Heart left ventricle (tissue), 16 donors: ENCODE measurements at regions of chr12 and their contacts with region 1.

Region 1: GRCh38 chr12:76763743-76764675 is at the start of gene ZDHHC17:
- DNase-seq: peak; percentile 91 to 96 (median 93)
- ATAC-seq: peak; percentile 89 to 97 (median 96)
- H3K4me3 ChIP-seq: peak within 1 kb of the TSS; percentile 69 to 97 (median 84)
- H3K27ac ChIP-seq: peak within 1 kb of the TSS; percentile 92 to 98 (median 97)
- H3K4me1 ChIP-seq: peaks cover 0 to 49% (median 32%) of the 10 kb centered on the region in 12 donors
- H3K27me3 ChIP-seq: no peaks in the 10 kb centered on the region
- CTCF ChIP-seq: no peak
- POLR2A ChIP-seq: peak in 1 of 2 donors; percentile 51
- total RNA-seq, gene ZDHHC17: 12.6 to 29.6 (median 19.4) TPM

Region 2: DNA sequence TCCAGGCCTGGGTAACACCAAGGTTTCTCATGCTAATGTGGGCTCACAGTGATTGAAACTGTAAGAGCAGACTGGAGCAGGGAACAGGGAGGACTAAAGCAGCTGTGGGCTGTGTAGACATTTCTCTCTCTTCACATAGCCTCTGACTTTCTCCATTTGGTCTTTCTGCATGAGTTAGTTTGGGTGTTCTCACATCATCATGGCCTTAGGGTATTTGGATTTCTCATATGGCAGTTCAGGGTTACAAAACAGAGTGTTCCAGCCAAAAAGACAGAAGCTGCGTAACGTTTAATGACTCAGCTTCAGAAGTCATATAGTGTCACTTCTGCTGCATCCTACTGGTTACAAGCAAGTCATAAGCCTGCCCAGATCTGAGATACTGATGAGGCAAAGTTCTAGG is 152.5 kb before region 1 on chr12:
- intact Hi-C with region 1: no loop called
- DNase-seq: no peak
- ATAC-seq: peak in 1 of 4 donors; percentile 51
- H3K4me3 ChIP-seq: no peak overlapping the region
- H3K27ac ChIP-seq: no peak overlapping the region
- H3K4me1 ChIP-seq: no peaks in the 10 kb centered on the region
- H3K27me3 ChIP-seq: no peaks in the 10 kb centered on the region
- CTCF ChIP-seq: no peak
- POLR2A ChIP-seq: no peak

Region 3: GRCh38 chr12:76685246-76685678 is 78.7 kb before region 1 on chr12:
- intact Hi-C with region 1: no loop called
- DNase-seq: peak in 4 of 5 donors; percentile 31 to 67 (median 32)
- ATAC-seq: peak; percentile 69 to 98 (median 87)
- H3K4me3 ChIP-seq: peak overlapping the region in 3 of 12 donors; percentile 3 to 25 (median 11)
- H3K27ac ChIP-seq: no peak overlapping the region
- H3K4me1 ChIP-seq: peaks cover 0 to 24% (median 9%) of the 10 kb centered on the region in 12 donors
- H3K27me3 ChIP-seq: no peaks in the 10 kb centered on the region
- CTCF ChIP-seq: no peak
- POLR2A ChIP-seq: no peak

Region 4: DNA sequence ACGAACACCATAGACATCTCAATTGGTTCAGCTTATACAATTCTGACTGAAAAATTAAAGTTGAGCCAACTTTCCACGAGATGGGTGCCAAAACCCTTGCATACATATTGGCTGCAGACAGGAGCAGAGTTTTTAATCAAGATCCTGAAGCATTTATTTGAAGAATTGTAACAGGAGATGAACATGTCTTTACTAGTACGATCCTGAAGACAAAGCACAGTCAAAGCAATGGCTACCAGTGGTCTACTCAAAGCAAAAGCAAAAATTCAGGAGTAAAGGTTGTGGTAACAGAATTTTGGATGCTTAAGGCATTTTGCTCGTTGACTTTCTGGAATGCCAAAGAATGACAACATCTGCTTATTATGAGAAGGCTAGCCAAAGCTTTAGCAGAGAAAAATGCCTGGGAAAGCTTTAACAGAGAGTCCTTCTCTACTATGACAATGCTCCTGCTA is 20.6 kb after region 1 on chr12:
- intact Hi-C with region 1: loop called in 2 of 10 experiments (anchors 1 to 2 kb)
- DNase-seq: no peak
- ATAC-seq: peak in 3 of 4 donors; percentile 12 to 50 (median 24)
- H3K4me3 ChIP-seq: peak overlapping the region in 2 of 12 donors; percentile 3 to 16
- H3K27ac ChIP-seq: peak overlapping the region in 9 of 12 donors; percentile 0 to 58 (median 29)
- H3K4me1 ChIP-seq: peaks cover 0 to 71% (median 42%) of the 10 kb centered on the region in 12 donors
- H3K27me3 ChIP-seq: no peaks in the 10 kb centered on the region
- CTCF ChIP-seq: no peak
- POLR2A ChIP-seq: no peak

Region 5: GRCh38 chr12:76878899-76879709 is 115.1 kb after region 1 on chr12 and contains the start of gene CSRP2:
- intact Hi-C with region 1: loop called in 2 of 10 experiments (anchors 1 to 2 kb)
- DNase-seq: peak; percentile 90 to 94 (median 93)
- ATAC-seq: peak; percentile 92 to 97 (median 96)
- H3K4me3 ChIP-seq: peak within 1 kb of the TSS; percentile 57 to 92 (median 70)
- H3K27ac ChIP-seq: peak within 1 kb of the TSS; percentile 48 to 94 (median 90)
- H3K4me1 ChIP-seq: peaks cover 0 to 34% (median 14%) of the 10 kb centered on the region in 12 donors
- H3K27me3 ChIP-seq: peaks cover 0 to 21% (median 0%) of the 10 kb centered on the region in 9 donors
- CTCF ChIP-seq: peak in 6 of 12 donors; percentile 11 to 35 (median 30)
- POLR2A ChIP-seq: peak in 1 of 2 donors; percentile 96
- total RNA-seq, gene CSRP2: 16.2 to 36.7 (median 24.0) TPM